Gastrocnemius medialis (tissue), 4 donors: ENCODE measurements at regions of chr10 and their contacts with region 1.

Region 1: DNA sequence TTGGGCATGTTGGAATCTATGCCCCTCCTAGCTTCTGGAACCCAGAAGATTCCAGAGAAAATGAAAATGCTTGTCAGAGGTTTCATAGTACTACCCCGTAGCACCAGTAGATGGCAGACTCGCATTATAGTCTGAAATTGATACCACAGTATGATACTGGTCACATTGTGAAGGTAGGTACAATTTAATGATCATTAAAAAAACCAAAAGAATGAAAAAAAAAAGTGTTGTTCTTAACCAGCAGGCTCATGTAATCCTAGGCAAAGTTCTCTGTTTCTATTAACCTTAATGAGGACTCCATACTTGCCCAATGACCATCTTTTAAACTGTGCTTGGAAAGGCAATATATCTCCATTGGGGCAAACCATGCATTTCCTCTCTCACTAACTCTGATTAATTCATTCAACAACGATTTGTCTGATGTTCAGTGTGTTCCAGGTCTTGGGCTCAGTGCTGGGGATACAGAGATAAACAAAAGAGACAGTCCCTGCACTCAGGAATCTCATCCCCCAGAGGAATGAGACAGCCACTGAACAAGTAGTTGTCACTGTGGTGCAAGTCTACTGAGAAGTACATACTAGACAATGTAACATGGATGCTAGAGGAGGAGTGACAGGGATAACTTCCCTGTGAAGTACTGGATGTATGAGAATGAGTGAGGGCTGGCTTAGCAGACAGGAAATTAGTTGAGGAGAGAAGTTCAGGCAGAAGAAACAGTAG is 223.5 kb upstream of the PHYHIPL start:
- DNase-seq: peak in 1 of 2 donors; percentile 18
- ATAC-seq: peak; percentile 46 to 59
- H3K4me3 ChIP-seq: no peak overlapping the region
- H3K27ac ChIP-seq: peak overlapping the region; percentile 33 to 53 (median 46)
- H3K4me1 ChIP-seq: peaks cover 6 to 31% of the 10 kb centered on the region in 2 donors
- H3K27me3 ChIP-seq: no peaks in the 10 kb centered on the region
- CTCF ChIP-seq: peak; percentile 61 to 83 (median 73)
- POLR2A ChIP-seq: no peak

Region 2: DNA sequence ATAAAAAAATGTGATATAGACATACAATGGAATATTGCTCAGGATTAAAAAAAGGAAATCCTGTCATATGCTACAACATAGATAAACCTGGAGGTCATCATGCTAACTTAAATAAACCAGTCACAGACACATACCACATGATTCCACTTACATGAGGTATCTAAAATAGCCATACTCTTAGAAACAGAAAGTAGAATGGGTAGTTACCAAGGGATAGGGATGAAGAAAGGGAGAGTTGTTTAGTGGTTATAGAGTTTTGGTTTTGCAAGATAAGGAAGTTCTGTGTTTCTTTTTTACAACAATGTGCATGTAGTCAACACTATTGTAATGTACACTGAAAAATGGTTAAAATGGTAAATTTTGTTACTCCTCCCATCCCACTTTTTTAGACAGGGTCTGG is 409.8 kb before region 1 on chr10:
- in situ Hi-C with region 1: no loop called
- intact Hi-C with region 1: no loop called
- DNase-seq: no peak
- ATAC-seq: no peak
- H3K4me3 ChIP-seq: no peak overlapping the region
- H3K27ac ChIP-seq: peak overlapping the region in 1 of 4 donors; percentile 29
- H3K4me1 ChIP-seq: peaks cover 13 to 20% of the 10 kb centered on the region in 2 donors
- H3K27me3 ChIP-seq: no peaks in the 10 kb centered on the region
- CTCF ChIP-seq: no peak
- POLR2A ChIP-seq: no peak

Region 3: GRCh38 chr10:58781873-58782488 is 170.9 kb before region 1 on chr10:
- in situ Hi-C with region 1: loop called in 1 of 4 experiments (anchors 10 kb)
- intact Hi-C with region 1: loop called (anchors 5 kb)
- DNase-seq: no peak
- ATAC-seq: peak; percentile 50 to 61
- H3K4me3 ChIP-seq: no peak overlapping the region
- H3K27ac ChIP-seq: peak overlapping the region; percentile 13 to 55 (median 40)
- H3K4me1 ChIP-seq: peaks cover 10 to 12% of the 10 kb centered on the region in 2 donors
- H3K27me3 ChIP-seq: no peaks in the 10 kb centered on the region
- CTCF ChIP-seq: peak in 4 of 5 experiments; percentile 33 to 60 (median 53)
- POLR2A ChIP-seq: no peak

Region 4: DNA sequence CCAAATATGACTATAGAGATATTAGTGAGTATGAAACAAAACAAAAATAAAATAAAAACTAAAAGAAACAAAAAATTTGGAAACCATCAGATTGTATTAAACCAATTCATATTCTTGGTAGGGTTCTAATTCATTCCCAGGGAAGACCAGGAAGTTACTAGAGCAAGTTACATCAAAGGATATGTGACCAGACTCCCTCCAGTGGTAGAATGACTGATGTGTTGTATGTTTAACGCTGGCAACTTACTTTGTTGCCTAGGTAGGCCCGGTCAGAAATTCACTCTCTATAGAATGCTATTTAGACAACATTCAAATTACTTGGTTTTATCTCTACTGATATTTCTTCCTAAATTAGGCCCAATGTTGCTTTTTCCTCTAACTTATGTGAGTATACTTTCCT is 228.8 kb after region 1 on chr10:
- in situ Hi-C with region 1: no loop called
- intact Hi-C with region 1: loop called (anchors 1 kb)
- DNase-seq: no peak
- ATAC-seq: peak; percentile 49 to 56
- H3K4me3 ChIP-seq: no peak overlapping the region
- H3K27ac ChIP-seq: no peak overlapping the region
- H3K4me1 ChIP-seq: peaks cover 0 to 5% of the 10 kb centered on the region in 2 donors
- H3K27me3 ChIP-seq: peaks cover 8 to 28% (median 27%) of the 10 kb centered on the region in 3 donors
- CTCF ChIP-seq: peak in 4 of 5 experiments; percentile 26 to 55 (median 46)
- POLR2A ChIP-seq: no peak

Region 5: GRCh38 chr10:59234816-59235429 is 282.0 kb after region 1 on chr10:
- in situ Hi-C with region 1: no loop called
- intact Hi-C with region 1: loop called (anchors 5 kb)
- DNase-seq: no peak
- ATAC-seq: no peak
- H3K4me3 ChIP-seq: no peak overlapping the region
- H3K27ac ChIP-seq: no peak overlapping the region
- H3K4me1 ChIP-seq: no peaks in the 10 kb centered on the region
- H3K27me3 ChIP-seq: no peaks in the 10 kb centered on the region
- CTCF ChIP-seq: peak; percentile 13 to 57 (median 49)
- POLR2A ChIP-seq: no peak

Region 6: DNA sequence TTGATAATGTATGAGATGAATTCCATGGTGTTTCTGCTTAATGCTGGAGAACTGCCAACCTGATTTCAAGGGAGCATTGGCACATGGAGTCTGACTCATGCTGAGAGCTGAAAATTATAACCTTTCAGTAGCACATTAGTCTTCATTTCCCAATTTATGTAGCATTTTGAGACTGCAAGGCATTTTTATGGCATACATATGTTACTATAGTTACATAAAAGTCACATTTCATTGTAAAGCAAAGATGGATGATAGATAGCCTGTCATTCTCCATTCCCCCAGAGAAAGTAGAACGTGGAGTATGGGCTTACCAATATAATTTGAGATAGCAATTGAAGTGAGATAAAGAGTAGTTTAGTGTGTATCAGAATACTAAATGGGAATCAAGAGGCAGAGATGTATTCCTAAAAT is 653.6 kb after region 1 on chr10:
- in situ Hi-C with region 1: loop called in 2 of 4 experiments (anchors 25 kb)
- intact Hi-C with region 1: no loop called
- DNase-seq: no peak
- ATAC-seq: no peak
- H3K4me3 ChIP-seq: no peak overlapping the region
- H3K27ac ChIP-seq: no peak overlapping the region
- H3K4me1 ChIP-seq: no peaks in the 10 kb centered on the region
- H3K27me3 ChIP-seq: no peaks in the 10 kb centered on the region
- CTCF ChIP-seq: no peak
- POLR2A ChIP-seq: no peak